ENCODE measurements at regions of chr22 and their contacts with region 1.

Region 1: GRCh38 chr22:41642331-41643110 is 21.4 kb downstream of the XRCC6 start:
- DNase-seq: no peak
- ATAC-seq: no peak
- H3K4me3 ChIP-seq: no peak overlapping the region
- H3K4me3 Mint-ChIP-seq: no peak overlapping the region
- H3K27ac ChIP-seq: no peak overlapping the region
- H3K27ac Mint-ChIP-seq: peak overlapping the region in 1 of 2 donors; percentile 19
- H3K4me1 ChIP-seq: no peaks in the 10 kb centered on the region
- H3K4me1 Mint-ChIP-seq: peaks cover 5 to 14% (median 10%) of the 10 kb centered on the region in 3 donors
- H3K27me3 ChIP-seq: no peaks in the 10 kb centered on the region
- H3K27me3 Mint-ChIP-seq: no peaks in the 10 kb centered on the region

Region 2: GRCh38 chr22:41660416-41660815 is 17.9 kb after region 1 on chr22:
- CTCF ChIA-PET with region 1: no interaction called
- POLR2A ChIA-PET with region 1: interaction called in 1 of 2 experiments, 11 read pairs
- DNase-seq: no peak
- ATAC-seq: no peak
- H3K4me3 ChIP-seq: no peak overlapping the region
- H3K4me3 Mint-ChIP-seq: no peak overlapping the region
- H3K27ac ChIP-seq: no peak overlapping the region
- H3K27ac Mint-ChIP-seq: peak overlapping the region; percentile 18 to 57
- H3K4me1 ChIP-seq: no peaks in the 10 kb centered on the region
- H3K4me1 Mint-ChIP-seq: peaks cover 0 to under 1% (median 0%) of the 10 kb centered on the region in 3 donors
- H3K27me3 ChIP-seq: no peaks in the 10 kb centered on the region
- H3K27me3 Mint-ChIP-seq: no peaks in the 10 kb centered on the region